ENCODE measurements at regions of chr19 and their contacts with region 1.

Region 1: DNA sequence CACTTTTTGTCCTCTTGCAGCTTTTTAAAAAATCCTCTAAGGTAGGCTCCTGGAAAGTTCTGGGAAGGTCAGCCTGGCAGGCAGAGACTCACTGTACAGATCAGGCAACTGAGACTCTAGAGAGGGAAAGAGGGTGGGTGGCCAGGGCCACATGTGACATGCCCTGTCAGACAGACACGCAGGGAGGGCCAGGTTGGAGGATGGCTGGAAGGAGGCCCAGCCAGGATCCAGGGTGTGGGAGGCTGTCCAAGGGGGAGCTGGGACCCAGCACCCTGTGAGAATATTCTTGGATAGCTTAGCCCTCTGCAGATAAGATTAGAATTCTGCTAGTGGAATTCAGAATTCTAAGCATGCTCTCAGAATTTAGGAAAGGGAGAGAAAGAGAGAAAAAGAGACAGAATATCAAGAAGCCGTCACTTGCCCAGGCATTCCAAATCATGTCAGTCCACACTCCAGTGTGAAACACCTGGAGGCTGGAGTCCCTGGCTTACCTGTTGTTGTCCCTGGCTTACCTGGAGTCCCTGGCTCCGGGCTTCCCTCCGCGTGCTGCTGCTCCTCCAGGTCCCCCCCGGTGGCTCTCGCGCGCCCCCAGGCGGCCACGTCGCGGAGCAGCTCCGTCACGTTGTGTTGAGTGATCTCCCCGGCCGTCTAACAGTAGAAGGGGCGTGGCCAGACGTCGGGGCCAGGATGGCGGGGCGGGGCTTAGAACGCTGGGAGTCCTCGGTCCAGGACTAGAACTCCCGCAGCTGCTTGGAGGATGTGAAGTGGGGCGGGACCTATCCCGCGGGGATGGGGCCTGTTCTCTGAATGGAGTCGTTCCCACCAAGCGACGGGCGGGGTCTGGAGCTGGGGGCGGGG is 2.8 kb upstream of the TNNI3 start:
- DNase-seq: peak; percentile 96 to 100
- H3K4me3 ChIP-seq: peak overlapping the region in 1 of 4 experiments; percentile 65; a peak in 2 of 8 replicates
- H3K27ac ChIP-seq: no peak overlapping the region
- H3K4me1 ChIP-seq: peaks cover 3 to 25% (median 9%) of the 10 kb centered on the region in 4 experiments
- H3K27me3 ChIP-seq: peaks cover 5 to 16% (median 14%) of the 10 kb centered on the region in 4 experiments; a peak in 6 of 7 replicates
- CTCF ChIP-seq: peak; percentile 93 to 98 (median 96)
- EP300 ChIP-seq: no peak; a peak in 1 of 3 replicates
- POLR2A ChIP-seq: no peak
- RAD21 ChIP-seq: peak; percentile 90 to 97

Region 2: DNA sequence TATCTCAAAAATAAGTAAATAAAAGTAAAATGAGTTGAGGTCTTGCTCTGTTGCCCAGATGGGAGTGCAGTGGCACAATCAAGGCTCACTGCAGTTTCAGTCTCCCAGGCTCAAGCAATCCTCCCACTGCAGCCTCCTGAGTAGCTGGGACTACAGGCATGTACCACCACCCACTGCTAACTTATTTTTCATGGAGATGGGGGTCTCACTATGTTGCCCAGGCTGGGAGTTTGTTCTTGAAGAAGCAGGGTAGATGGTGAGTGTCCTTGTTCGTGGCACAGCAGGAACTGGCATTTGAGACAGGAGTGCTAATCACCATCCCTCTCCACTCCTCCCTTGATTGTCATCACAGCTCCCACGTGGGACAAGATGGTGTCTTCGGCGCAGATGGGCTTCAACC is 190.7 kb before region 1 on chr19:
- CTCF ChIA-PET with region 1: no interaction called
- POLR2A ChIA-PET with region 1: no interaction called
- DNase-seq: no peak
- H3K4me3 ChIP-seq: no peak overlapping the region
- H3K27ac ChIP-seq: no peak overlapping the region
- H3K4me1 ChIP-seq: no peaks in the 10 kb centered on the region
- H3K27me3 ChIP-seq: no peaks in the 10 kb centered on the region
- CTCF ChIP-seq: no peak
- EP300 ChIP-seq: no peak
- POLR2A ChIP-seq: no peak
- RAD21 ChIP-seq: no peak

Region 3: DNA sequence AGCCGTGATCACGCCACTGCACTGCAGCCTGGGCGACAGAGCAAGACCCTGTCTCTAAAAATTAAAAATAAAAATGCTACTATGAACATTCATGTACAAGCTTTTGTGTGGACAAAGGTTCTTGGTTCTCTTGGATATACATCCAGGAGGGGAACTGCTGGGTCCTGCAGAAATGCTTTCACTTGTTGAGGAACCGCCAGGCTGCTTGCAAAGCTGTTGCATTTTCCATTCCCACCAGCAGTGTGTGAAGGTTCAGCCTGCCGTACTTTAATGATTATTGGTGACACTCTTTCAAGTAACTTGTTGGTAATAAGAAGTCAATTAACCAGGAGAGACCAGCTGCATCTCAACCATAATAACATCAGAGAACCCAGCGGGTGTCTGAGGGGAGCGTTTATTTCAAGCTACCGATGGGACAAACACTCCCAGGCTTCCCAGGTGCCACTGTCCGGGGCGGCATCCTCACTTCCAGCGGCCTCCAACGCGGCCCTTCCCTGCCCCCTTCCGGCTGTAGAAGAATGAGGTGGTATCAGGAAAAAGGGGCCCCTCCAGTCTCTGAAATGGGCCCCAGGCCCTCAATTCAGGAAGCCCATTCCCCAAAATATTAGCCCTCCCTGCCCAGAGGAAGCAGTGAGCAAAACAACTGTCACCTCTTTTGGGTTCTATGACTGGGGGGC is 27.8 kb before region 1 on chr19:
- CTCF ChIA-PET with region 1: interaction called, 16 read pairs
- POLR2A ChIA-PET with region 1: interaction called, 3 read pairs
- DNase-seq: no peak
- H3K4me3 ChIP-seq: no peak overlapping the region
- H3K27ac ChIP-seq: no peak overlapping the region
- H3K4me1 ChIP-seq: peaks cover 0 to 2% (median 0%) of the 10 kb centered on the region in 4 experiments; a peak in 1 of 7 replicates
- H3K27me3 ChIP-seq: no peaks in the 10 kb centered on the region
- CTCF ChIP-seq: 0 out of 4 replicates have a peak, but pooled peaks of 1 of the 3 experiments have one; percentile 5
- EP300 ChIP-seq: no peak
- POLR2A ChIP-seq: no peak
- RAD21 ChIP-seq: peak in 1 of 2 experiments; percentile 39; a peak in 2 of 4 replicates

Region 4: DNA sequence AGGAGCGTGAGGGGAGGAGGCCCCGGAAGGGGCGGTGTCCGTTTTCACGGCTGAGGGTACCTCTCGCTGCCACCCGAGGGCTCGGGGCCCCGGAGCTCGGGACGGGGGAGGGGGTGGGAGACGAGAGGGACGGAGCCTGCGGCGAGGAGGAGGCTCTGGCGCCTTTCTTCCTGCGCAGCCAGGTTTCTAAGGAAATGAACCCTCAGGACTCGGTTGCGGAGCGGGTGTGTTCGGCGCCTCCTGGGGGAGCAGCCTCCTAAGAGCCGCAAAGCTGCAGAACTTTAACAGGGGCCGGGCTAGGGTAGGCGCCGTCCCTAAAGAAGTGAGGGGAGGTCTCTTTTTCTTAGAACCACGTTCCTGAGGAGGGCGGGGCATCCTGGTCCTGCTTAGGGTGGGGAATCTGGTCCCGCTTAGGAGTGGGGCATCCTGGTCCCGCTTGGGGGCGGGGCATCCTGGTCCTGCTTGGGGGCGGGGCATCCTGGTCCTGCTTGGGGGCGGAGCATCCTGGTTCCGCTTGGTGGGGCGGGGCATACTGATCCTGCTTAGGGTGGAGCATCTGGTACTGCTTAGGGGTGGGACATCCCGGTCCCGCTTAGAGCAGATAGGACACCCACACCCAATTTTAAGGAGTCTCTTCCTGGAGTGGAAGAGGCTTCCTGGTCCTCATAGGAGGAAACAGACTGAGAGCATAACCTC is 13.5 kb after region 1 on chr19:
- CTCF ChIA-PET with region 1: interaction called, 28 read pairs
- POLR2A ChIA-PET with region 1: interaction called, 5 read pairs
- DNase-seq: peak in 1 of 2 experiments; percentile 99
- H3K4me3 ChIP-seq: peak overlapping the region; percentile 60 to 77 (median 73)
- H3K27ac ChIP-seq: no peak overlapping the region
- H3K4me1 ChIP-seq: peaks cover 5 to 21% (median 14%) of the 10 kb centered on the region in 4 experiments
- H3K27me3 ChIP-seq: peaks cover 2 to 51% (median 28%) of the 10 kb centered on the region in 4 experiments; a peak in 6 of 7 replicates
- CTCF ChIP-seq: peak in 1 of 3 experiments; percentile 0; a peak in 1 of 4 replicates
- EP300 ChIP-seq: no peak
- POLR2A ChIP-seq: no peak
- RAD21 ChIP-seq: no peak